ENCODE measurements at regions of chr9 and their contacts with region 1.

Region 1: GRCh38 chr9:128117613-128118471 is 9.7 kb downstream of the PTGES2 start:
- DNase-seq: peak; percentile 73
- ATAC-seq: peak; percentile 79
- H3K4me3 ChIP-seq: no peak overlapping the region
- H3K27ac ChIP-seq: no peak overlapping the region
- H3K4me1 ChIP-seq: no peaks in the 10 kb centered on the region; the same call in 1 of the 2 replicates
- H3K27me3 ChIP-seq: no peaks in the 10 kb centered on the region
- CTCF ChIP-seq: peak; percentile 99

Region 2: DNA sequence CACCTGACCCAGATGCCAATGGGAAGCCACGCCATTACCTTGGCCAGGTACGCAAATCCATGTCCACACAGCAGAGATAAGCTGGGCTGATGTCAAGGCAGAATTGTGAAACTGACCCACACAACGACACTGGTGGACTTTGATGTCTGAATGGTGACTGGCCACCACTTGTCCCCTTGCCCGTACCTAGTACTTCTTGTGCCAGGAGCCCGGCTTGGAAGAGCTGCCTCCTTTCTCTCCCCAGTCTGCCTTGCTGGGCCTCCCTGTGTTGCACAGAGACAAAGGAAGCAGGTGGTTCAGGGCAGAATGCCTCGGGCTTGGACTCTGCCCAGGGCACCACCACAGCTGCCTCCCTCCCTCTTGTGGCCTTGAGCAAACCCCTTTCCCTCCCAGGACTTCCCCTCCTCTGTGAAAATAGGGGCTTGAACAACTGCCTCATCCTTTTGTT is 13.6 kb before region 1 on chr9:
- CTCF ChIA-PET with region 1: interaction called, 10 read pairs
- POLR2A ChIA-PET with region 1: interaction called, 3 read pairs
- in situ Hi-C with region 1: no loop called
- intact Hi-C with region 1: no loop called
- DNase-seq: no peak
- ATAC-seq: no peak
- H3K4me3 ChIP-seq: no peak overlapping the region
- H3K27ac ChIP-seq: no peak overlapping the region
- H3K4me1 ChIP-seq: no peaks in the 10 kb centered on the region
- H3K27me3 ChIP-seq: no peaks in the 10 kb centered on the region
- CTCF ChIP-seq: no peak

Measured in Panc1 (cell line).